ENCODE measurements at regions of chr1 and their contacts with region 1.

Region 1: GRCh38 chr1:25223471-25223870 is 8.8 kb downstream of the SYF2 start:
- DNase-seq: no peak

Region 2: GRCh38 chr1:24673336-24673735 is 550.1 kb before region 1 on chr1:
- intact Hi-C with region 1: loop called in 1 of 2 experiments (anchors 10 kb)
- DNase-seq: no peak

Region 3: DNA sequence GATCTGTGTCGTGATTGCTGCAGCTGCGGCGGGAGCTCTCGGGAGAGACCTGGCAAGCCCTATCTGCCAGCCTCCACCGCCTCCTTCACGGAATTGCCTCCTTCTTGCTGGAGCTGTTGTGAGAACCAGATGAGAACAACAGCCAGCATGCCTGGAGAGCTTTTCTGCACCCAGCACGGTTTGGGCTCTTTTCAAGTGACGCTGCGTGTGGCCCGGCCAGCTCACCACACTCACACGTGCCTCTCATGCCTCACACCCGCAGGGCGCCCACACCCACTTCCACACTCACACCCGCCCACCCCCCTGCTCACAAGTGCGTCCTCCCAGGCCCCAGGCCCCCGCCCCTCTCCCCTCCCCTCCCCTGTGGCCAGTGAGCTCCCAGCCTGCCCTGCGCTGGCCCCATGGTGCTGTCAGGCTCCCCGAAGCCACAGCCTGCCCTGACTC is 157.7 kb before region 1 on chr1:
- intact Hi-C with region 1: no loop called
- DNase-seq: peak; percentile 80

Measured in posterior vena cava (tissue), 2 donors.